Psoas muscle (tissue), 8 donors: ENCODE measurements at regions of chr14 and their contacts with region 1.

Region 1: DNA sequence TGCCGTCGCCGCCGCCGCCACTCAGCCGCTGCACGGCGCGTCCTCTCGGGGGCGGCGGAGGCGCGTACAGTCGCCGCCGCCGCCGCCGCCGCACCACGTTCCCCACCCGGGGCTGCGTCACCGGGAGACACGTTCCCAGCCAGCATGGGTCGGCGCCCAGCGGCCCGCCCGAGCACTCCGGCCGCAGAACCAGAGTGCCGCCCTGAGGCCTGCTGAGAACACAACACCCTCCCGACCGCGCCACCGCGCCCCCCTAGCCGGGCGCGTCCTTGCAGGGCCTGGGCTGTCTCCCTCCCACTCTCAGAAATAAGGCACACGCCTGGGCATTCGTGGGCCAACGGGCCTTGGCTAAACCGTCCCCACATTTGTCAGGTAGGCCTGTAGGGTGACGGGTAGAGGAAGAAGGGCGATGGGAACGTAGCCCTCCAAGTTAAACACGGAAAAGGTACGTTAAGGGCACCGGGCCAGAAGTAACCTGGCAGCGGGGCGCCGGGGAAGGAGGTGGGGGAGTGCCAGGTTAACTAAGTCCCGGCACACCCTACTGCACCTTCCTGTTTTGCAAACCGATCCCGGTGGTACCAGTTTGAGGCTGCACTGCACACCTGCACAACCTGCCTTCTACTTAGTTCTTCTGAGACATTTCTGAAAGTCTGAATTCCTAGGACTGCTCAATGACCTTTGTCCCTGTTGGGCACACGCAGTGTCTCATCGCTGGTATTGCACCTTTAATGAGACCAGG is at the start of gene MAP4K5:
- DNase-seq: peak; percentile 92 to 96
- ATAC-seq: peak; percentile 99
- H3K4me3 ChIP-seq: peak within 1 kb of the TSS; percentile 92
- H3K27ac ChIP-seq: peak within 1 kb of the TSS; percentile 94
- H3K4me1 ChIP-seq: peaks cover 21% of the 10 kb centered on the region
- H3K27me3 ChIP-seq: no peaks in the 10 kb centered on the region
- CTCF ChIP-seq: peak; percentile 92
- total RNA-seq, gene MAP4K5: 12.9 to 17.1 (median 15.6) TPM

Region 2: DNA sequence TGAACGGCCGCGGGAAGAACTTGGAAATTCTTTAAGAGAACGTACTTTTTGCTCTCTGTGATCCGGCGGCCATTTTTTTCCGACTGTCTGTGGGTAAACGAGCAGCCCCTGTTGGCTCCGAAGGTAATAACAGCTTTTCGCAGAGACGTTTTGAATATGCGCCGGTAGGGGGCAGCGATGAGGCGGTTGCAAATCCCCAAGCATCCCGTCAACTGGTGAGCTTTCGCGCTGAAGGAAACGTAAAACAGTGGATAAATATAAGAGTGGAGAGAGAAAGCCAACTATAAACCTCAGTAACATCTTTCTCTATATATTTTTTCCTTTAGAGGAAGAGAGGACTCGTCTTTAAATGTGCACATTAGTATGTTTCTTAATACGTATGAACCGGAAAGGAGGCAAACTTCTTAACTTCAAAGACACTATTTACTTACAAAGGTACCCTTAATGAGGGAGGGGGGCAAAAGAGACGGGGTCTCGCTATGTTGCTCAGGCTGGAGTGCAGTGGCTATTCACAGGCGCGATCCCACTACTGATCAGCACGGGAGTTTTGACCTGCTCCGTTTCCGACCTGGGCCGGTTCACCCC is 670.5 kb before region 1 on chr14:
- intact Hi-C with region 1: loop called in 1 of 2 experiments (anchors 5 kb)
- DNase-seq: peak; percentile 79 to 86
- ATAC-seq: peak; percentile 70 to 78 (median 74)
- H3K4me3 ChIP-seq: peak overlapping the region; percentile 90
- H3K27ac ChIP-seq: peak overlapping the region; percentile 99
- H3K4me1 ChIP-seq: peaks cover 15% of the 10 kb centered on the region
- H3K27me3 ChIP-seq: no peaks in the 10 kb centered on the region
- CTCF ChIP-seq: peak; percentile 100

Region 3: GRCh38 chr14:50311975-50312733 is 220.5 kb before region 1 on chr14 and contains the starts of genes DMAC2L and L2HGDH:
- intact Hi-C with region 1: loop called in 1 of 2 experiments (anchors 5 kb)
- DNase-seq: peak; percentile 95 to 96
- ATAC-seq: peak; percentile 98 to 99 (median 99)
- H3K4me3 ChIP-seq: peak within 1 kb of the TSS; percentile 92
- H3K27ac ChIP-seq: peak within 1 kb of the TSS; percentile 91
- H3K4me1 ChIP-seq: peaks cover 24% of the 10 kb centered on the region
- H3K27me3 ChIP-seq: no peaks in the 10 kb centered on the region
- CTCF ChIP-seq: peak; percentile 54
- total RNA-seq, gene DMAC2L: 26.7 to 43.5 (median 35.1) TPM
- total RNA-seq, gene L2HGDH: 9.3 to 10.9 (median 10.2) TPM

Region 4: DNA sequence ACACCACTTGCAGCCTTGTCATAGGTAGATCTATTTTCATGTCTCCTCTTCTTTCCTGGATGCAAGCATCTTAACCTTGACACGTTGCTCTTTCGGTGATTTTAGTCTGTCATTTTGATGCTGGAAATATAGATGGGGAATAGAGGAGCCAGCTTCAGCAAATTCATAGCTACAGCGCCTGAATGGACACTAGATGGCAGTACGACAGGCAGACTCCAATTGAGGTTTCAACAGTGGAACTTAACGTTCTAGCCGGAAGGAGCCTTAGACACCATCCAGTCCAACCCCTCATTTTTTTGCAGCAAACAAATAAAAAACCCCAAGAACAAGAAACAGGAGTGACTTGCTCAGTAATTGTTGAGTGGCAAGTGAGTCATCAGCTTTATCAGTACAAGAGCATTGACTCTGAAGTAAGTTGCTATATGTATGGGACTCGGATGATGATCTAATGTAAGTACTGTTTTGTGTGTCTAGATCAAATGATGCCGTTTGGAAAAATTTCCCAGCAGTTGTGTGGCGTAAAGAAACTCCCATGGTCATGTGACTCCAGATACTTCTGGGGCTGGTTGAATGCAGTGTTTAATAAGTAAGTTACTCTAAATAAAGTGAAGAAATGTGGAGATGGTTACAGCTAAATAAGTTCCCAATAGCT is 211.5 kb before region 1 on chr14:
- intact Hi-C with region 1: loop called in 1 of 2 experiments (anchors 1 kb)
- DNase-seq: no peak
- ATAC-seq: peak; percentile 86 to 97 (median 92)
- H3K4me3 ChIP-seq: peak overlapping the region; percentile 42
- H3K27ac ChIP-seq: peak overlapping the region; percentile 58
- H3K4me1 ChIP-seq: peaks cover 39% of the 10 kb centered on the region
- H3K27me3 ChIP-seq: no peaks in the 10 kb centered on the region
- CTCF ChIP-seq: peak; percentile 84

Region 5: GRCh38 chr14:50342221-50343078 is 190.2 kb before region 1 on chr14:
- intact Hi-C with region 1: loop called in 1 of 2 experiments (anchors 5 kb)
- DNase-seq: peak in 1 of 2 donors; percentile 61
- ATAC-seq: peak; percentile 77 to 87 (median 82)
- H3K4me3 ChIP-seq: peak overlapping the region; percentile 46
- H3K27ac ChIP-seq: peak overlapping the region; percentile 43
- H3K4me1 ChIP-seq: peaks cover 9% of the 10 kb centered on the region
- H3K27me3 ChIP-seq: no peaks in the 10 kb centered on the region
- CTCF ChIP-seq: peak; percentile 35